Dorsolateral prefrontal cortex (tissue), 120 donors: ENCODE measurements at regions of chr18 and their contacts with region 1.

Region 1: GRCh38 chr18:61025596-61025995 is 307.6 kb upstream of the CDH20 start:
- DNase-seq: no peak
- H3K4me3 ChIP-seq: no peak overlapping the region
- H3K27ac ChIP-seq: no peak overlapping the region
- H3K27me3 ChIP-seq: no peaks in the 10 kb centered on the region
- CTCF ChIP-seq: no peak

Region 2: GRCh38 chr18:60925892-60926291 is 99.7 kb before region 1 on chr18:
- intact Hi-C with region 1: no loop called
- DNase-seq: no peak
- H3K4me3 ChIP-seq: no peak overlapping the region
- H3K27ac ChIP-seq: no peak overlapping the region
- H3K27me3 ChIP-seq: no peaks in the 10 kb centered on the region
- CTCF ChIP-seq: no peak

Region 3: DNA sequence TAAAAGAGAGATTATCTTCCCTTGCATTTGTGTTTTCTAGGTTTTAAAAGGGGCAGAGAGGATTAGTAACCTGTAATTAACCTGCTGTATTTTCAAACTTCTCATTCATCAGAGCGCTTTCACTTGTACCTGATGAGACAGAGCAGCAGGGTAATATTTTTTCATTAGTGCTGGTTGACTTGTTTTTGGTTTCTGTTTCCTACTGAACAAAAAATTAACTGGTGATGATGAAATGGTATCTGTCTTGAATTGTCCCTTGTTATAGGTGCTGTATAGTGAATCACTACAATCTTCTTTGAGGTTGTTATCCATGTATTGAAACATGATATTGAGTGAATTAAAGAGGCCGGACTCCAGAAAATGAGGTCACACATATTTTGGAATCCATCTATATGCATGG is 345.5 kb after region 1 on chr18:
- intact Hi-C with region 1: loop called in 1 of 2 experiments (anchors 5 kb)
- DNase-seq: no peak
- H3K4me3 ChIP-seq: no peak overlapping the region
- H3K27ac ChIP-seq: peak overlapping the region in 9 of 59 donors; percentile 4 to 56 (median 26)
- H3K27me3 ChIP-seq: no peaks in the 10 kb centered on the region
- CTCF ChIP-seq: no peak